ENCODE measurements at regions of chr2 and their contacts with region 1.

Region 1: GRCh38 chr2:224576088-224576715 is 9.0 kb downstream of the CUL3 start:
- DNase-seq: no peak
- ATAC-seq: no peak
- H3K4me3 ChIP-seq: no peak overlapping the region
- H3K27ac ChIP-seq: no peak overlapping the region
- H3K4me1 ChIP-seq: peaks cover 9 to 96% (median 68%) of the 10 kb centered on the region in 12 donors
- H3K27me3 ChIP-seq: no peaks in the 10 kb centered on the region
- CTCF ChIP-seq: no peak
- POLR2A ChIP-seq: no peak

Region 2: GRCh38 chr2:224357098-224357901 is 218.9 kb before region 1 on chr2:
- intact Hi-C with region 1: no loop called
- DNase-seq: peak in 2 of 5 donors; percentile 27 to 39
- ATAC-seq: peak in 3 of 4 donors; percentile 66 to 80 (median 68)
- H3K4me3 ChIP-seq: no peak overlapping the region
- H3K27ac ChIP-seq: no peak overlapping the region
- H3K4me1 ChIP-seq: no peaks in the 10 kb centered on the region
- H3K27me3 ChIP-seq: no peaks in the 10 kb centered on the region
- CTCF ChIP-seq: peak; percentile 65 to 87 (median 80)
- POLR2A ChIP-seq: no peak

Region 3: GRCh38 chr2:224492531-224492930 is 83.7 kb before region 1 on chr2:
- intact Hi-C with region 1: loop called in 2 of 10 experiments (anchors 10 kb)
- DNase-seq: no peak
- ATAC-seq: no peak
- H3K4me3 ChIP-seq: no peak overlapping the region
- H3K27ac ChIP-seq: no peak overlapping the region
- H3K4me1 ChIP-seq: peaks cover 0 to 11% (median 0%) of the 10 kb centered on the region in 12 donors
- H3K27me3 ChIP-seq: no peaks in the 10 kb centered on the region
- CTCF ChIP-seq: no peak
- POLR2A ChIP-seq: no peak

Region 4: DNA sequence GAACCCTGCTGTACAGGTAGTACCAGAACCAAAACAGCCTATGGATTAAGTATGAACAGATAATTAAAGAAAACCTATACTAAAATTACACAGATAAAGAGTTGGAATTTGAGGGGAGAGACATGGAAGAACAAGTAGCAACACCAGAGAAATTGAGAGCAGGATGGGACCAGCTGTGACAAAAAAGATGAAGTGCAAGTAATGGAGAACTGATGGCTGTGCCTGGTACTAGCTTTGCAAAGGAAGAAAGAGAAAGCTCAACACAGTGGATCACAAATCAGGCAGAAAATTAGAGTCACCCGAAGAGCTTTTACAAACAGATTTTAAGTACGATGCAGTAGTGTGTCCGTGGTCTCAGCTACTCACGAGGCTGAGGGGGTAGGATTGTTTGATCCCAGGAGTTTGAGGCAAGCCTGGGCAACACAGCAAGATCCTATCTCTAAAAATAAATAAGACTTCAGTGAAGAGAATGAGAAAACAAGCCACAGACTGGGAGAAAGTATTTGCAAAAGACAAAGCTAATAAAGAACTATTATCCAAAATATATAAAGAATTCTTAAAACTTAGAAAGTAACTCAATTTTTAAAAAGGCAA is 37.5 kb before region 1 on chr2:
- intact Hi-C with region 1: loop called in 1 of 10 experiments (anchors 5 kb)
- DNase-seq: no peak
- ATAC-seq: no peak
- H3K4me3 ChIP-seq: no peak overlapping the region
- H3K27ac ChIP-seq: no peak overlapping the region
- H3K4me1 ChIP-seq: peaks cover 0 to 16% (median 4%) of the 10 kb centered on the region in 12 donors
- H3K27me3 ChIP-seq: no peaks in the 10 kb centered on the region
- CTCF ChIP-seq: no peak
- POLR2A ChIP-seq: no peak

Measured in heart left ventricle (tissue), 16 donors.